PC-3 (cell line): ENCODE measurements at regions of chr1 and their contacts with region 1.

Region 1: DNA sequence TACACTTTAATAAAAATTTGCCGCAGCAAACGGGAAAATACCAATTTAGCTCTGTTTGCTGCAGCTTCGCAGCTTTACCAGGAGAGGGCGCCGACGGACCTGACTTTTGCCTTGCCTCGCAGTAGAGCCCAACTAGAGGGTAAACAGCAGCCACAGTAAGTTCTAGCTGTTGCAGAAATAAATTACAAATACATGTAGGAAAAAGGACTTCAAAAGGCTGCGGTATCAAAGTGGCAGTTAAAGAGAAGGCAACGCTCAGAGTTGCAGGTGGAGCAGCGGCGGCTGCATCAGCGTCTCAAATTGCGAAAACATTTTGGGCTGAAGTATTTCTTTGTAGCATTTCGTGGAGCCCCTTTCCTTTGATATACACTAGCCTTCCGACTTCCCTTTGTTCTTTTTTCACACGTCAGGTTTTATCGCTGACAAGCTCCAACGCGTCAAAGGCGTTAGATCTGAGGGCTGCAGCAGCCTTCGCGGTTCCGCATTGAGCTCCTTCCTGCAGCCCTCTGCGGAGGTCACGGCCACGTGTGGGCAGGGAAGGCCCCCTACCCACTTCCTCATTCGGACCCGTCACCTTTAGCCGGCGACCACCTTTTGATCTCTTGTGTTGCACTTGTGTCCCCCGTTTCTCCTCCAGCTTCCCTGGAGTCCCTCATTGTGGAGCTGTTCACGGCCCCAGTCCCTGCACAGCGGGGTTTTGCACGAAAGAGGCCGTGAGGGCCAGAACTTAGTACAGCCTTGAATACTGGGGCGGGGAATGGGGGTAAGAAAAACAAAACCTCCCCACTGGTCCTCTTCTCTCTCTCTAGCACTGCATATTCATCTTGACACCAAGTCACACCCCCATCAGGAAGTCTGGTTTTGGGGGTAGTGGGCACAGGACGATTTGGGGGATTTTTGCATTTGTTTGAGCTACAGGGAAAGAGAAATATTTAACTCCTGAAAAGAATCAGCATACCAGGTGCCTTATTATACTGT is 72.8 kb downstream of the S1PR1 start:
- DNase-seq: peak; percentile 57
- ATAC-seq: peak; percentile 67
- H3K4me3 ChIP-seq: no peak overlapping the region
- H3K27ac ChIP-seq: no peak overlapping the region
- H3K4me1 ChIP-seq: no peaks in the 10 kb centered on the region
- H3K27me3 ChIP-seq: peaks cover 78% of the 10 kb centered on the region
- CTCF ChIP-seq: peak; percentile 87

Region 2: DNA sequence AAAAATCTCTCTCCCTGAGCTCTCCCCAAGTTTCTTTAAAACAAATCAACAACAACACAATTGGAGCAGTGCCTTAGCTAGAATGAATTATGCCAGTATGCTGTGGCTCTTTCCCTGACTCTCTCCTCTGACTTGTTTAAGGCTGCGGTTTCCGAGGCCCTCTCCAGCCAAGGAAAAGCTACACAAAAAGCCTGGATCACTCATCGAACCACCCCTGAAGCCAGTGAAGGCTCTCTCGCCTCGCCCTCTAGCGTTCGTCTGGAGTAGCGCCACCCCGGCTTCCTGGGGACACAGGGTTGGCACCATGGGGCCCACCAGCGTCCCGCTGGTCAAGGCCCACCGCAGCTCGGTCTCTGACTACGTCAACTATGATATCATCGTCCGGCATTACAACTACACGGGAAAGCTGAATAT is 70.9 kb before region 1 on chr1:
- CTCF ChIA-PET with region 1: no interaction called
- POLR2A ChIA-PET with region 1: no interaction called
- intact Hi-C with region 1: no loop called
- DNase-seq: peak; percentile 92
- ATAC-seq: peak; percentile 62
- H3K4me3 ChIP-seq: peak overlapping the region; percentile 62
- H3K27ac ChIP-seq: no peak overlapping the region
- H3K4me1 ChIP-seq: peaks cover 9% of the 10 kb centered on the region; the same call in 1 of the 2 replicates
- H3K27me3 ChIP-seq: no peaks in the 10 kb centered on the region
- CTCF ChIP-seq: peak; percentile 95

Region 3: DNA sequence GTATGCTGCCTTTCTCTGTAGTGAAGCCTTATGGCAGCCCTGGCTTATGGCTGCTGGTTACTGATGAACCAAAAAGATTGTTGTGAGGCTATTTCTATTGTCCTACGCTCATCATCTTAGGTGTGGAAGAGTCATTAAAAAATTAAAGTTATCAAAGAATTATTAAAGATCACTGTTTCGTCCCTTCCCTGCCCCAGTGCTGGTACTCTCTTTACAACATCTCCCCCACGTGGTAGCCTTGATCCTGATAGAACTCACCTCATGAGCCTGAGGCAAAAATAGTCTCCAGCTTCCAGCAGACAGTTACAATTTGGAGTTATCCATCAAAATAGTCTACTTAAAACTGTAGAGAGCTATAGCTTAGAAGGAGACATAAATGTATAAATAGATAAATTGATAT is 128.7 kb after region 1 on chr1:
- CTCF ChIA-PET with region 1: interaction called, 9 read pairs
- POLR2A ChIA-PET with region 1: no interaction called
- intact Hi-C with region 1: loop called (anchors 1 kb)
- DNase-seq: peak; percentile 51
- ATAC-seq: peak; percentile 55
- H3K4me3 ChIP-seq: no peak overlapping the region
- H3K27ac ChIP-seq: no peak overlapping the region
- H3K4me1 ChIP-seq: no peaks in the 10 kb centered on the region
- H3K27me3 ChIP-seq: peaks cover 83% of the 10 kb centered on the region
- CTCF ChIP-seq: peak; percentile 60